Activated CD4-positive, alpha-beta memory T cell treated with anti-CD3 and anti-CD28 coated beads for 36 hours (primary cell): ENCODE measurements at regions of chr7 and their contacts with region 1.

Region 1: DNA sequence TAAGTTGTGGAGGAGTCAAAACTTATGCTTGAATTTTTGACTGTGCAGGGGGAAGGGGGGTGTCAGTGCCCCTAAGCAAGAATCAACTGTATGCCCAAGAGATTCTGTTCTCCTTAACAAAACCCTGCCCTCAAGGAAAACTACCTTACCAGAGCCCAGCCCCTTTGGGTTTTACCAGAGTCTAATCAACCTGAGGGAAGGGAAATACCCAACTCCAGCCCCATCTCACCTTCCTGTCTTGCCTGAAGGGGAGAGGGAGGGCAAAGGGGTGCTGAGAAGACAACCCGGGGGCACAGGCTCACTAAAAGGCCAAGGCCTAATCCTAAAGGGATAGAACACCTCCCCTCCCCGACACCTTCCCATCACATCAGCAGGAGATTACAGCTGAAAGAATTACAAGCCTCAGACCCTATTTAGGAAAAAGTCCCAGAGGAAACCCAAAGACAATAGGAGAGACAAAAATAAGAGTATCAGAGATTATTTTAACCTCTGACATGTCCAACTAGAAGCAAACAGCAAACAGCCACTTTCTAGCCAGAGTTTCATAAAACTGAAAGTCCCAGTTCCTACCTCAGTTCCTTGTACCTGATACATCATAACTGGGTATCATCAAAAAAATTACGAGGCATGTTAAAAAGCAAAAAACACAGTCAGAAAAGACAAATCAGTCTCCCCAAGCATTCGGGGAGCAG is 26.8 kb upstream of the C7orf33 start:
- DNase-seq: no peak
- H3K4me3 Mint-ChIP-seq: peak overlapping the region; percentile 31
- H3K27ac Mint-ChIP-seq: peak overlapping the region; percentile 89
- H3K4me1 Mint-ChIP-seq: peaks cover 17% of the 10 kb centered on the region
- H3K27me3 Mint-ChIP-seq: peaks cover 7% of the 10 kb centered on the region

Region 2: DNA sequence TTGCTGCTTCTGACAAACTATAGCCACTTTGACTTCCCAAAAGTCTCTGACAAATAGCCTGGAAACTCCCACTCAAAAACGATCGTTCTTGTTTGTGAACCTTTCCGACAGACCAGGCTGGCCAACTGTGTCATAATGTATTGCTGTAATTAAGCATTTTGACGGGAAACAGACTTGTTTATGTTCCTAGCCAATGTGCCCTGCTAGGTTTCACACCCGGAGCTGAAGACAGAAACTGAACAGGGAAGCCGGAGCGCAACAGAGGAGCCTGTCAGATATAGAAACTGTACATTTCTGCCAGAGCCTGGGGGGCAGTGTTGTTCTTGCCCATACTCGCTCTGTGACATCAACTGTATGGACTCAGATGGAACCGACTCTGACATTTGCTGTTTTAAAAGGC is 28.5 kb before region 1 on chr7:
- CTCF ChIA-PET with region 1: no interaction called
- POLR2A ChIA-PET with region 1: no interaction called
- intact Hi-C with region 1: loop called (anchors 1 kb)
- DNase-seq: peak; percentile 65
- H3K4me3 Mint-ChIP-seq: peak overlapping the region; percentile 61
- H3K27ac Mint-ChIP-seq: peak overlapping the region; percentile 65
- H3K4me1 Mint-ChIP-seq: peaks cover 7% of the 10 kb centered on the region
- H3K27me3 Mint-ChIP-seq: peaks cover 23% of the 10 kb centered on the region

Region 3: GRCh38 chr7:148575640-148576411 is 12.1 kb after region 1 on chr7:
- CTCF ChIA-PET with region 1: interaction called, 34 read pairs
- POLR2A ChIA-PET with region 1: no interaction called
- intact Hi-C with region 1: no loop called
- DNase-seq: peak; percentile 80
- H3K4me3 Mint-ChIP-seq: no peak overlapping the region
- H3K27ac Mint-ChIP-seq: no peak overlapping the region
- H3K4me1 Mint-ChIP-seq: peaks cover 6% of the 10 kb centered on the region
- H3K27me3 Mint-ChIP-seq: peaks cover 6% of the 10 kb centered on the region

Region 4: GRCh38 chr7:148684289-148684830 is 120.6 kb after region 1 on chr7:
- CTCF ChIA-PET with region 1: no interaction called
- POLR2A ChIA-PET with region 1: no interaction called
- intact Hi-C with region 1: no loop called
- DNase-seq: no peak
- H3K4me3 Mint-ChIP-seq: no peak overlapping the region
- H3K27ac Mint-ChIP-seq: no peak overlapping the region
- H3K4me1 Mint-ChIP-seq: peaks cover 3% of the 10 kb centered on the region
- H3K27me3 Mint-ChIP-seq: no peaks in the 10 kb centered on the region

Region 5: GRCh38 chr7:148706368-148706767 is 142.6 kb after region 1 on chr7:
- CTCF ChIA-PET with region 1: no interaction called
- POLR2A ChIA-PET with region 1: no interaction called
- intact Hi-C with region 1: no loop called
- DNase-seq: no peak
- H3K4me3 Mint-ChIP-seq: no peak overlapping the region
- H3K27ac Mint-ChIP-seq: no peak overlapping the region
- H3K4me1 Mint-ChIP-seq: peaks cover 78% of the 10 kb centered on the region
- H3K27me3 Mint-ChIP-seq: no peaks in the 10 kb centered on the region